T-cell (primary cell): ENCODE measurements at regions of chr1 and their contacts with region 1.

Region 1: GRCh38 chr1:205003393-205004131 is 39.5 kb upstream of the CNTN2 start:
- DNase-seq: no peak
- ATAC-seq: no peak
- H3K4me3 ChIP-seq: no peak overlapping the region
- H3K4me3 Mint-ChIP-seq: no peak overlapping the region
- H3K27ac ChIP-seq: no peak overlapping the region
- H3K27ac Mint-ChIP-seq: no peak overlapping the region
- H3K4me1 ChIP-seq: no peaks in the 10 kb centered on the region
- H3K4me1 Mint-ChIP-seq: no peaks in the 10 kb centered on the region
- H3K27me3 ChIP-seq: peaks cover 0 to 32% of the 10 kb centered on the region in 2 experiments
- H3K27me3 Mint-ChIP-seq: peaks cover 2 to 12% of the 10 kb centered on the region in 2 donors

Region 2: DNA sequence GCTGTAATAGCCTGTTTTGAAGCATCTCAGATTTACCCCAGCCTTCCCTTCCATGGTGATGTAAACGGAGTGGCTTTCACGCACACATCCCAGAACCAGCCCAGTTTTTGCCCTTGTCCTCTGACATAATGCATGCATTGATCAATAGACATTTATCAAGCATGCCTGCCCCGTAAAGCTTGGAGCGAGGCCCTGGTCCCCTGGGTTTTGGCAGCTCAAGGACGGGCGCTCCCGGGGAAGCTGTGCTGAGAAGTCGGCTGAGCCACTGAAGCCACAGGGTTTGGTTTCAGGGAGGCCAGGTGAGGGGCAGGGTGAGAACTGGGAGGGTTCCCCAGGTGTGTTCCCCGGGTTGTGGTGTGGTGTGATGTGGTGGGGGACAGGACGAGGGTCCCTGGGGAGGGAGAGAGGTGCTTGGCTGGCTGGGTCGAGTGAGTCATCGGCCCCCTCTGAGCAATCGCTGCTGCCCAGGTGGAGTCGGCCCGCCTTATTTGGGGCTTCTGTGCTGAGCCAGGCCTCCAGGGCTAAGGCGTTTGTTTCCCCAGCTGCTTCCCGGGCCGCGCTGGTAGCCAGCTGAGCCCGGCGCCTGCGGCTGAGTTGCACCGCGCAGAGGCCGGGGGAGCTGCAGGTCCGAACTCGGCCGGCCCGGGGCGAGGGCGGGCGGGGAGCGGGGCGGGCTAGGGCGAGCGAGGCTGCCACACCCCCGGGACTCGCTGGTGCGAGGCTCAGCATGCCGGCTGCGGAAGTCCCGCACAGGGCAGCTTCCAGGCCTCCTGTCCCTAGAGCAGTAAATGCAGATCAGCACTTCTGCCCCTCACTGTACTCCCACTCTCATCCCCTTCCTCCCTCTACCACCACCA is 1353.3 kb before region 1 on chr1:
- CTCF ChIA-PET with region 1: interaction called in 1 of 2 experiments, 10 read pairs
- POLR2A ChIA-PET with region 1: no interaction called
- DNase-seq: peak in 34 of 35 experiments; percentile 10 to 81 (median 52)
- ATAC-seq: peak; percentile 65 to 82 (median 78)
- H3K4me3 ChIP-seq: peak overlapping the region; percentile 43 to 46
- H3K4me3 Mint-ChIP-seq: peak overlapping the region; percentile 71 to 83 (median 81)
- H3K27ac ChIP-seq: peak overlapping the region; percentile 89
- H3K27ac Mint-ChIP-seq: peak overlapping the region; percentile 93 to 95
- H3K4me1 ChIP-seq: peaks cover 40 to 82% of the 10 kb centered on the region in 2 experiments
- H3K4me1 Mint-ChIP-seq: peaks cover 68 to 84% (median 77%) of the 10 kb centered on the region in 3 donors
- H3K27me3 ChIP-seq: no peaks in the 10 kb centered on the region
- H3K27me3 Mint-ChIP-seq: no peaks in the 10 kb centered on the region

Region 3: DNA sequence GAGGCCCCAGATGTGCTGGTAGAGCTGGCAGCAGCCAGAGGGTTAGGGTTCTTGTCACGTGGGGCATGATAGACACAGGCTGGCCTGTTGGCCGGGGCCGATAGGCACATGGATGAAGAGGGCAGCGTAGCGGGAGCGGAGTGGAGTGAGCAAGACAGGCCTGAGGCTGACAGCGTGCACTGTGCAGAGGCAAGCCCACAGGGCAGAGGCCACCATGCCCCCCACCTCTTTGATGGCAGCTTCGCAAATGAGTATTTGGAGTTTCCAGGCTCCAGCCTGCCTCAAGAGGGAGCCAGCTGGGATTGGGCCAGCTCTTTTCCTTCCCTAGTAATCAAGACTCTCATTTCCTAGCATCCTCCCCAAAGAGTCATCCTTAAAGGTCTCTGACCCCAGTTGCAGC is 267.7 kb after region 1 on chr1:
- CTCF ChIA-PET with region 1: no interaction called
- POLR2A ChIA-PET with region 1: no interaction called
- DNase-seq: no peak
- ATAC-seq: no peak
- H3K4me3 ChIP-seq: no peak overlapping the region
- H3K4me3 Mint-ChIP-seq: no peak overlapping the region
- H3K27ac ChIP-seq: no peak overlapping the region
- H3K27ac Mint-ChIP-seq: no peak overlapping the region
- H3K4me1 ChIP-seq: peaks cover 22 to 32% of the 10 kb centered on the region in 2 experiments
- H3K4me1 Mint-ChIP-seq: peaks cover 27 to 30% (median 28%) of the 10 kb centered on the region in 3 donors
- H3K27me3 ChIP-seq: peaks cover 0 to 12% of the 10 kb centered on the region in 2 experiments
- H3K27me3 Mint-ChIP-seq: no peaks in the 10 kb centered on the region

Region 4: DNA sequence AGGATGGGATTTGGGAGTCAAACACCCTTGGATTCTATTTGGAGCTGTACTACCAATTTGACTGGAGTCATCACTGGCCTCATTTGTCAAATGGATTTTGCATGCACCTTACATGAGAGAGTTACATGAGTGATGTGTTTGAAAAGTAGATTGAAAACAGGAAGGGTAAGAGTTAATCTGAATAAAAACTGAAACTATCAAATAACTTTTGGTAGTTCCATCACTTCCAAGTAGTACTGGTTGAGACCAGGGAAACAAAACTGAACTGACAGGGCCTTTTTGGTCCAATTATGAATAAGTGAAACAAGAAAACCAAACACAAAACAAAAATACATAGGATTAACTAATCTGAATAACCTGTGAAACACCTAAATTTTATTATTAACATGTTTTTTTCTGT is 716.2 kb after region 1 on chr1:
- CTCF ChIA-PET with region 1: no interaction called
- POLR2A ChIA-PET with region 1: interaction called in 1 of 2 experiments, 10 read pairs
- DNase-seq: no peak
- ATAC-seq: no peak
- H3K4me3 ChIP-seq: no peak overlapping the region
- H3K4me3 Mint-ChIP-seq: no peak overlapping the region
- H3K27ac ChIP-seq: no peak overlapping the region
- H3K27ac Mint-ChIP-seq: peak overlapping the region in 1 of 2 donors; percentile 7
- H3K4me1 ChIP-seq: no peaks in the 10 kb centered on the region
- H3K4me1 Mint-ChIP-seq: peaks cover 1 to 3% (median 2%) of the 10 kb centered on the region in 3 donors
- H3K27me3 ChIP-seq: no peaks in the 10 kb centered on the region
- H3K27me3 Mint-ChIP-seq: no peaks in the 10 kb centered on the region